ENCODE measurements at regions of chr6 and their contacts with region 1.

Region 1: DNA sequence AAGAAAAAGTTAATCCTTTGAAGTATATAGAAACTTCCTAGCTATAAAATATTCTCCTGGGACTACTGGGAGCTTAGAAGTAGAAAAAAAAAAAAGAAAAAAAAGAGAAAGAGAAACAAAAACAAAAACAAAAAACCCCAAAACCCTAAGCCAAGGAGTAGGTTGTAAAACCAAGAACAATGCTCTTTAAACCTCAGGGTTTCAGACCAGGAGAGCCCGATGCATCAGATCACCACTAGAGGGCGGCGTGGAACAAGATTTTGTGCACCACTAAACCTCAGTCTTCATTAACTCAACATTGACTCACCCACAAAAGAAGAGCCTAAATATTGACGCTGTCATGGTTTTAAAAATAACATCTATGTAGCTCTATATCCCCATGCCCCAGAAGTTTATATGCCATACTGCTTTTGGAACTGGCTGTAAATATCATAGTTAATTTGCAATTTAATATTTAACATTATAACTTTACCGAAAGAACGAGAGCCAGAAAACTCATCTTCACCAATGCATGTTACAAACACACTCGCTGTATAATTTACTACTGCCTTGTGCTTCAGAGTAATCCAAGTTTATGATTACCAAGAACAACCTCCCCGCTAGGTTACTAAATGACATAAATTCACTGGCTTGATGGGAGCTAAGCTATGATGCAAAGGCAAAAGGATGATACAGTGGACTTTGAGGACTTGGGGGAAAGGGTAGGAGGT is 19.2 kb downstream of the MCUR1 start:
- DNase-seq: peak; percentile 93
- H3K4me3 Mint-ChIP-seq: no peak overlapping the region
- H3K27ac Mint-ChIP-seq: no peak overlapping the region
- H3K4me1 Mint-ChIP-seq: peaks cover 24% of the 10 kb centered on the region
- H3K27me3 Mint-ChIP-seq: no peaks in the 10 kb centered on the region

Region 2: GRCh38 chr6:13742961-13743735 is 52.0 kb before region 1 on chr6:
- CTCF ChIA-PET with region 1: no interaction called
- POLR2A ChIA-PET with region 1: no interaction called
- intact Hi-C with region 1: loop called (anchors 1 kb)
- DNase-seq: no peak
- H3K4me3 Mint-ChIP-seq: peak overlapping the region; percentile 53
- H3K27ac Mint-ChIP-seq: no peak overlapping the region
- H3K4me1 Mint-ChIP-seq: peaks cover 14% of the 10 kb centered on the region
- H3K27me3 Mint-ChIP-seq: no peaks in the 10 kb centered on the region

Region 3: GRCh38 chr6:13767121-13767808 is 27.9 kb before region 1 on chr6:
- CTCF ChIA-PET with region 1: interaction called, 12 read pairs
- POLR2A ChIA-PET with region 1: no interaction called
- intact Hi-C with region 1: loop called (anchors 2 kb)
- DNase-seq: peak; percentile 46
- H3K4me3 Mint-ChIP-seq: peak overlapping the region; percentile 52
- H3K27ac Mint-ChIP-seq: no peak overlapping the region
- H3K4me1 Mint-ChIP-seq: peaks cover 31% of the 10 kb centered on the region
- H3K27me3 Mint-ChIP-seq: no peaks in the 10 kb centered on the region

Region 4: GRCh38 chr6:13814176-13814937 is 19.2 kb after region 1 on chr6 and contains the start of gene MCUR1:
- CTCF ChIA-PET with region 1: interaction called, 9 read pairs
- POLR2A ChIA-PET with region 1: interaction called, 4 read pairs
- intact Hi-C with region 1: loop called (anchors 2 kb)
- DNase-seq: peak; percentile 90
- H3K4me3 Mint-ChIP-seq: peak within 1 kb of the TSS; percentile 87
- H3K27ac Mint-ChIP-seq: peak within 1 kb of the TSS; percentile 84
- H3K4me1 Mint-ChIP-seq: peaks cover 28% of the 10 kb centered on the region
- H3K27me3 Mint-ChIP-seq: no peaks in the 10 kb centered on the region
- total RNA-seq, gene MCUR1: 36.6 to 38.8 TPM

Region 5: GRCh38 chr6:13873285-13874190 is 78.3 kb after region 1 on chr6:
- CTCF ChIA-PET with region 1: interaction called, 12 read pairs
- POLR2A ChIA-PET with region 1: no interaction called
- intact Hi-C with region 1: no loop called
- DNase-seq: peak; percentile 82
- H3K4me3 Mint-ChIP-seq: peak overlapping the region; percentile 49
- H3K27ac Mint-ChIP-seq: no peak overlapping the region
- H3K4me1 Mint-ChIP-seq: peaks cover 12% of the 10 kb centered on the region
- H3K27me3 Mint-ChIP-seq: peaks cover 14% of the 10 kb centered on the region

Region 6: DNA sequence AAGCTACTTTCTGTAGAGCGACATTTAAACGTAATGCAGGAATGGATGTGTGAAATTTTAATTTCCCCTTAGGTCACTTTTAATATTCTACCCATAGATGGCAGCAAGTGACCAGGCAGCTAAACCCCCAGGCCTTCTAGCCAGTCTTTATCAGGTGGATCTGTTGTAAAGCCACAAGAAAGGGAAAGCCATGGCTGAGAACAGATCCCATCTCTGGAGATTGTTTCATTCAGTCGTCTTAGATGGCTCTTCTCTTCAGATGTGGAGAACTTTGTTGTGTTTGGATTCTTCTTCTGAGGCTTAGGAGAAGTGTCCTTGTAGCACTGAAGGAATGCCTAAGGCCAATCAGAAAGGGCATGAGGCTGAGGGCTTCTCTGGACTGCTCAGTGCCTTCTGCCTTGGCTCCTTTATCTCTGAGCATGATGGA is 113.8 kb after region 1 on chr6:
- CTCF ChIA-PET with region 1: interaction called, 5 read pairs
- POLR2A ChIA-PET with region 1: no interaction called
- intact Hi-C with region 1: loop called (anchors 10 kb)
- DNase-seq: peak; percentile 49
- H3K4me3 Mint-ChIP-seq: no peak overlapping the region
- H3K27ac Mint-ChIP-seq: no peak overlapping the region
- H3K4me1 Mint-ChIP-seq: no peaks in the 10 kb centered on the region
- H3K27me3 Mint-ChIP-seq: peaks cover 28% of the 10 kb centered on the region

Region 7: DNA sequence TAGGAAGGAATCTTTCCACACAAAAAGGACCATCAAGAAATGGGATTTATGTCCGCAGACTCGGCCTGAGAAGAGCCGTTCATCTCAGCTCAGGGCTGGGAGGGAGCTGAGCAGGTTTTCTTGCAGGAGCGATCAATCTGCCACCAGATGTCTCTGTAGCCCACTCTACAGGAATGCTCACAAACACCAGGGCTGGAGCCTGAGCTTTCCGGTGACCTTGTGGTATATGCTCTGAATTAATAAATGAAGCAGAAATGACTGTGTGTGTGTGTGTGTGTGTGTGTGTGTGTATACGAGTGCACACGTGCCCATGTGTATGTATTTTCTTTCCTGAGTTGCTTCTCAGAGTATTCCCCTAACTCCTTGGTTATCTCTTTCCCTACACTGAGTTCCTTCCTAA is 334.4 kb after region 1 on chr6:
- CTCF ChIA-PET with region 1: no interaction called
- POLR2A ChIA-PET with region 1: no interaction called
- intact Hi-C with region 1: loop called (anchors 10 kb)
- DNase-seq: peak; percentile 33
- H3K4me3 Mint-ChIP-seq: no peak overlapping the region
- H3K27ac Mint-ChIP-seq: no peak overlapping the region
- H3K4me1 Mint-ChIP-seq: peaks cover 35% of the 10 kb centered on the region
- H3K27me3 Mint-ChIP-seq: no peaks in the 10 kb centered on the region